Endothelial cell of umbilical vein (primary cell): ENCODE measurements at regions of chr1 and their contacts with region 1.

Region 1: GRCh38 chr1:179142889-179143299 is 61.0 kb downstream of the TOR3A start:
- DNase-seq: peak; percentile 97
- H3K4me3 ChIP-seq: peak overlapping the region; percentile 83 to 99 (median 87)
- H3K27ac ChIP-seq: peak overlapping the region; percentile 95
- H3K4me1 ChIP-seq: peaks cover 49% of the 10 kb centered on the region
- H3K27me3 ChIP-seq: no peaks in the 10 kb centered on the region
- CTCF ChIP-seq: no peak
- POLR2A ChIP-seq: peak; percentile 99

Region 2: DNA sequence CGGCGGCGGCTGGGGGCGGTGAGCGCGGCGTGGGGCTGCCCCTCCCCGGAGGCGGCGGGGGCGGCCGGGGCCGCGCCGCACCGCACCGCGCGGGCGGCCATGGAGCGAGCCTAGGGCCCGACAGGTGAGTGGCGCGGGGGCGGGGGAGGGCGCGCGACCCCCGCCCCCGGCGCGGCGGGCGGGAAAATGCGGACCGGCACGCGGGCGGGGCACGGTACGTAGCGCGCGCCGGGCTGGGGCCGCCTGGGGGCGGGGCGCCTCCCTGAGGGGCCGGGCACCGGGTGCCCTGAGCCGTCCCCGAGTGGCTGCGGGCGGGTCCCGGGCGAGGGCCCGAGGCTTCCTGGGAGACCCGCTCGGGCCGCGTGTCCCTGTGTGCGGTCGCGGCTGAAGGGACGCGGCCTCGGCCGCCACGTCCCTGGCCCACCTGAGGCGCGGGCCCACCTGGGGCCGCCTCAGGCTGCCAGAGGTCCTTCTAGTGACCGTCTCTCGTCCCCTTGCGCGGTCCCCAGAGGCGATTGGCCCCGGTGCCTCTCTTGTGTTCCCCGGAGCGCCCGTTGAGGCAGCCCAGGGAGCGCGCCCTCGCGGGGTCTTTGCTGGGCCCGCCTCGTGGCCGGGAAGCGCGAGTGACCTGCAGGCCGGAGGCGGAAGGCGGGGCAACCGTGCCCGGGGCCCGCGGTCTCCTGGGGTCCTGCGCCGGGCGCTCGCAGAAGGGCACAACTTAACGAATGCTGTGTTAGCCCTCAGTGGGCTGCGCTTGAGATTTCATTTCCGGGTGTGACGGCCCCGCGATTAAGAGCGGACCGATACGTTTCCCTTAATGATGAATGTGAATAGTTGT is 116.7 kb before region 1 on chr1:
- CTCF ChIA-PET with region 1: no interaction called
- POLR2A ChIA-PET with region 1: no interaction called
- dilution Hi-C with region 1: no loop called
- intact Hi-C with region 1: no loop called
- DNase-seq: peak; percentile 52
- H3K4me3 ChIP-seq: peak overlapping the region; percentile 71 to 92 (median 78)
- H3K27ac ChIP-seq: peak overlapping the region; percentile 71
- H3K4me1 ChIP-seq: peaks cover 13% of the 10 kb centered on the region
- H3K27me3 ChIP-seq: peaks cover 10 to 18% of the 10 kb centered on the region in 2 experiments
- CTCF ChIP-seq: no peak
- POLR2A ChIP-seq: peak; percentile 42

Region 3: DNA sequence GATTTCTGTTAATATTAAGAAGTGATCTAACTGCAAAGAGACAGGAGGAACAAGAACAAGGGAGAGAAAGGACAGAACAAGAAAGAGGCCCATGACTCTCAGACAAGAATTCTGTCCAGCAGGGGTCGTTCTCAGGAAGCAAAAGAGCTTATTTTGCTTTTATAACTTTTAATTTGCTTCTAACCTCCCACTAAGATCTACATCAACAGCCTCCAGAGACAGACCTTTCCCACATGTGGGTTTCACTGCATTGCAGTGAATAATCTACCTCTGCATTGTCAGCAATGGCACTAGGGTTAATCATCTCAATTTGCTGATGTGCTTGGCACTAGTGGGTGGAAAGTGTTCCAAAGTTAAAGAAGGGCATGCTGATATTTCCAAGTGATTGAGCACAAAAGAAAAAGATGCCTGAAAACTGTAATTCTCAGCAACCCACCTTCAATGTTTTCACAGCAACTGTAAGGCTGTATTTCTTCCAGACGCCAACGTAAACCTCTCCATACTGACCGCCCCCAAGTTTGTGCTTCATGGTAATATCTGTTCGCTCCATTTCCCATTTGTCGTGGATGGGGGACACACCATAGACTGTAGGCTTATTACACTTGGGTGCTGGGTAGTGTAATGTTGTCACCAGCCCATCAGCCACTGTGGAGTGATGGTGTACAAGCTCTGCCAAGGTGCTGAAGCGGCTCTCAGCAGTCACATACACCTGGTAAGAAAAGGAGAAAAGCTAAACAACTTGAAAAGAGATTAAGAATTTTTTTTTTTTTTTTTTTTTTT is 21.5 kb before region 1 on chr1:
- CTCF ChIA-PET with region 1: interaction called, 10 read pairs
- POLR2A ChIA-PET with region 1: interaction called, 14 read pairs
- dilution Hi-C with region 1: no loop called
- intact Hi-C with region 1: no loop called
- DNase-seq: no peak
- H3K4me3 ChIP-seq: no peak overlapping the region
- H3K27ac ChIP-seq: no peak overlapping the region
- H3K4me1 ChIP-seq: peaks cover 13% of the 10 kb centered on the region
- H3K27me3 ChIP-seq: no peaks in the 10 kb centered on the region
- CTCF ChIP-seq: peak; percentile 25 to 39
- POLR2A ChIP-seq: no peak

Region 4: DNA sequence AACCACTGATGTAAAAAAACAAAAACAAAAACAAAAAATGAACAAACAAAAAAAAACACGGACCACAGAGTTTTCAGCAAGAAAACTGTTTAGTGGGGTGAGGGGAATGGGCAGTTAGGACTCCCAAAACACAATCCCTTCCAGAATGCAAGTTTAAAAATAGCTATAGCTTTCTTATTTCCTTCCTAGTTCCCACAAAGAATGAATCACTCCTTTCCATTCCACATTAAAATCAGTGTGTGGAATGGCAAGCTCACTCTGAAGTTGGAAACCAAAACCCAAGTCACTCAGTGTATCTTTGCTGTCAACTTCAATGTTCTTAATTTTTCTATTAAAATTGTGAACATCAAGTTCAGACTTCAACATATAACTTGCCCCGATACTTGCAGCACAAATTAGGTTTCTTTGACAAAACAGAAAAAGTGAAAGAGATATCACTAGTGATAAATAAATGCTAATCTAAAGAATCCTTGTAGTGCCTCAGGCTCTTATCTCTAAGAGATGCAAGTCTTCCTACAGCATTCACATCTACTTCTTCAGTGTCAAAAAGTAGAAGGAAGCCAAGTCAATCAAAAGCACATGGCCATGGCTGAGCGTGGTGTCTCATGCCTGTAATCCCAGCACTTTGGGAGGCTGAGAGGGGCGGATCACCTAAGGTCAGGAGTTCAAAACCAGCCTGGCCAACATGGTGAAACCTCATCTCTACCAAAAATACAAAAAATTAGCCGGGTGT is 15.6 kb before region 1 on chr1:
- CTCF ChIA-PET with region 1: interaction called, 7 read pairs
- POLR2A ChIA-PET with region 1: interaction called, 14 read pairs
- dilution Hi-C with region 1: no loop called
- intact Hi-C with region 1: loop called (anchors 1 kb)
- DNase-seq: peak; percentile 77
- H3K4me3 ChIP-seq: peak overlapping the region in 1 of 3 experiments; percentile 34
- H3K27ac ChIP-seq: peak overlapping the region; percentile 53
- H3K4me1 ChIP-seq: peaks cover 57% of the 10 kb centered on the region
- H3K27me3 ChIP-seq: no peaks in the 10 kb centered on the region
- CTCF ChIP-seq: no peak
- POLR2A ChIP-seq: no peak

Region 5: DNA sequence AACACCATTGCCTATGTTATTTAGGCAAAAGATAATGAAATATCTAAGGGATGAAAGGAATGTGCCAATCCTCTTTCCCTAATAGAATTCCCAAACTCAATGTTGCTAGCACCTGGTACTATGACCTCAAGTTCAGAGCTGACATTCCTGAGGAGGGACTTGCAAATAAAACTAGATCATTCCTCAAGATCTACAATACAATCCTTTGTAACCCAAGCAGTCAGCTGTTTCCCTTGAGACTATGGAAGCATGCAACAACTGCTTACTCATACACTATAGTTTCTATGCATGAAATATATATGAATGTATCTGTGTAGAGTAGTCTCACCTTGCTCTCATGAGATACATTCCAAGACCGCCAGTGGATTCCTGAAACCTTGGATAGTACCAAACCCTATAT is 21.6 kb after region 1 on chr1:
- CTCF ChIA-PET with region 1: interaction called, 3 read pairs
- POLR2A ChIA-PET with region 1: no interaction called
- dilution Hi-C with region 1: no loop called
- intact Hi-C with region 1: loop called (anchors 2 kb)
- DNase-seq: peak; percentile 52
- H3K4me3 ChIP-seq: no peak overlapping the region
- H3K27ac ChIP-seq: no peak overlapping the region
- H3K4me1 ChIP-seq: peaks cover 9% of the 10 kb centered on the region
- H3K27me3 ChIP-seq: no peaks in the 10 kb centered on the region
- CTCF ChIP-seq: no peak
- POLR2A ChIP-seq: no peak

Region 6: GRCh38 chr1:179190861-179191260 is 48.0 kb after region 1 on chr1:
- CTCF ChIA-PET with region 1: interaction called, 4 read pairs
- POLR2A ChIA-PET with region 1: no interaction called
- dilution Hi-C with region 1: no loop called
- intact Hi-C with region 1: loop called (anchors 1 kb)
- DNase-seq: peak; percentile 67
- H3K4me3 ChIP-seq: no peak overlapping the region
- H3K27ac ChIP-seq: peak overlapping the region; percentile 10
- H3K4me1 ChIP-seq: peaks cover 8% of the 10 kb centered on the region
- H3K27me3 ChIP-seq: no peaks in the 10 kb centered on the region
- CTCF ChIP-seq: no peak
- POLR2A ChIP-seq: no peak

Region 7: DNA sequence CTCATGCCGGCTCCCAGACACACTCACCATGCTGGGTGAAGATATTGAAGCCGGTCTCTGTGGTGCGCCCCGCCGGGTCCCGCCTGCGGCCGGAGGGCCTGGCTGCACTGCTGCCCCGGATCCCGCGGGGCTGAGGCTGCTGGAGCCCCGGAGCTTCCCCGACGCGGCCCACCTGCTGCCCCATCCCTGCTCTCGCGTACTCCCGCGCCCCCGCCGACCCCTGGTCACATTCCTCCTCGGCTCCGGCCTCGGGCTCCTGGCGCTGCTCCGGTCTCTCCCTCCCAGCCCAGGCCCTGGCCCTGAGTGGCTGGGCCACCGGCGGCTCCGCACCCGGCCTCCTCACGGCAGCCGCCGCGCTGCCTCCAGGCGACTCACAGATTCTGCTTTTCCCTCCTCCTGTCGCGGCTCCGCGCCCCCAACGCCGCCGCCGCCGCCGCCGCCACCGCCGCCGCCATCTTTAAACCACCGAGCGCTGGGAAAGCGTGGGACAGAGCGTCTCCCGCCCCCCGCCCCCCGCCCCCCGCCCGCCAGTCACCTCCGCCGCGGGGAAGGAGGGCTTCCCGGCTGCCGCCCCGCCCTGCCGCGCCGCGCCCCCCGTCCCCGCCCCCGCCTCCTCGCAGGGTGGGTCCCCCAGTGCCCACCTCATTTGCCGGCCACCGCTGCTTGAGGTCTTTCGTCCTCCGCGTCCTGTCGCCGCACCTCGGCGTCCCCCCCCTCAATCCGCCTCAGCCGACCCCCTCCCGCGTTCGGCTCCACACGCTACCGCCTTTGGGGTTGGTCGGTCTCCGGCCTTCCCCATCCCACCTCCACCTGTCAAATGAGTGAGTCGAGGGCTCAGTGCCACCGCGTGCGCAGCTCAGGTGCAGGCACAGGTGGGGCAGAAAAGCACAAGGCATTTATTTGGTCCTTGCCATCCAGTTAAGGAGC is 86.6 kb after region 1 on chr1 and contains the start of gene ABL2:
- CTCF ChIA-PET with region 1: no interaction called
- POLR2A ChIA-PET with region 1: no interaction called
- dilution Hi-C with region 1: no loop called
- intact Hi-C with region 1: loop called (anchors 5 kb)
- DNase-seq: peak; percentile 48
- H3K4me3 ChIP-seq: peak within 1 kb of the TSS; percentile 64 to 93 (median 83)
- H3K27ac ChIP-seq: peak within 1 kb of the TSS; percentile 56
- H3K4me1 ChIP-seq: peaks cover 28% of the 10 kb centered on the region
- H3K27me3 ChIP-seq: no peaks in the 10 kb centered on the region
- CTCF ChIP-seq: no peak
- POLR2A ChIP-seq: peak; percentile 27
- total RNA-seq, gene ABL2: 158 and 165 TPM in 2 replicates